ENCODE measurements at regions of chr1 and their contacts with region 1.

Region 1: GRCh38 chr1:1374929-1375662 is at the start of gene AURKAIP1:
- DNase-seq: peak; percentile 80 to 98 (median 96)
- ATAC-seq: peak; percentile 84
- H3K4me3 ChIP-seq: peak within 1 kb of the TSS; percentile 74
- H3K4me3 Mint-ChIP-seq: peak within 1 kb of the TSS; percentile 82 to 96 (median 94)
- H3K27ac ChIP-seq: peak within 1 kb of the TSS; percentile 88
- H3K27ac Mint-ChIP-seq: peak within 1 kb of the TSS; percentile 91 to 98 (median 97)
- H3K4me1 ChIP-seq: peaks cover 18 to 35% of the 10 kb centered on the region in 2 donors
- H3K4me1 Mint-ChIP-seq: peaks cover 0 to 37% (median 21%) of the 10 kb centered on the region in 7 donors
- H3K27me3 ChIP-seq: no peaks in the 10 kb centered on the region
- H3K27me3 Mint-ChIP-seq: peaks cover 0 to 2% (median 0%) of the 10 kb centered on the region in 5 donors
- total RNA-seq, gene AURKAIP1: 53.8 to 107 (median 64.5) TPM

Region 2: GRCh38 chr1:1019122-1019999 is 355.7 kb before region 1 on chr1:
- CTCF ChIA-PET with region 1: no interaction called
- POLR2A ChIA-PET with region 1: interaction called, 3 read pairs
- intact Hi-C with region 1: loop called in 1 of 2 experiments (anchors 10 kb)
- DNase-seq: peak; percentile 69 to 90 (median 82)
- ATAC-seq: peak; percentile 93
- H3K4me3 ChIP-seq: peak overlapping the region; percentile 11
- H3K4me3 Mint-ChIP-seq: peak overlapping the region in 9 of 10 donors; percentile 48 to 80 (median 68)
- H3K27ac ChIP-seq: peak overlapping the region; percentile 27
- H3K27ac Mint-ChIP-seq: peak overlapping the region in 4 of 9 donors; percentile 40 to 65 (median 55)
- H3K4me1 ChIP-seq: peaks cover 4 to 10% of the 10 kb centered on the region in 2 donors
- H3K4me1 Mint-ChIP-seq: peaks cover 9 to 26% (median 15%) of the 10 kb centered on the region in 7 donors
- H3K27me3 ChIP-seq: no peaks in the 10 kb centered on the region
- H3K27me3 Mint-ChIP-seq: peaks cover 0 to 17% (median 0%) of the 10 kb centered on the region in 5 donors

Region 3: GRCh38 chr1:1231400-1232223 is 143.5 kb before region 1 on chr1 and contains the start of gene SDF4:
- CTCF ChIA-PET with region 1: no interaction called
- POLR2A ChIA-PET with region 1: interaction called, 4 read pairs
- intact Hi-C with region 1: loop called in 1 of 2 experiments (anchors 1 kb)
- DNase-seq: peak; percentile 90 to 98 (median 96)
- ATAC-seq: peak; percentile 96
- H3K4me3 ChIP-seq: peak within 1 kb of the TSS; percentile 90
- H3K4me3 Mint-ChIP-seq: peak within 1 kb of the TSS; percentile 89 to 96 (median 93)
- H3K27ac ChIP-seq: peak within 1 kb of the TSS; percentile 96
- H3K27ac Mint-ChIP-seq: peak within 1 kb of the TSS; percentile 68 to 94 (median 92)
- H3K4me1 ChIP-seq: peaks cover 12 to 28% of the 10 kb centered on the region in 2 donors
- H3K4me1 Mint-ChIP-seq: peaks cover 16 to 42% (median 33%) of the 10 kb centered on the region in 7 donors
- H3K27me3 ChIP-seq: no peaks in the 10 kb centered on the region
- H3K27me3 Mint-ChIP-seq: no peaks in the 10 kb centered on the region
- total RNA-seq, gene SDF4: 75.8 to 124 (median 110) TPM

Region 4: DNA sequence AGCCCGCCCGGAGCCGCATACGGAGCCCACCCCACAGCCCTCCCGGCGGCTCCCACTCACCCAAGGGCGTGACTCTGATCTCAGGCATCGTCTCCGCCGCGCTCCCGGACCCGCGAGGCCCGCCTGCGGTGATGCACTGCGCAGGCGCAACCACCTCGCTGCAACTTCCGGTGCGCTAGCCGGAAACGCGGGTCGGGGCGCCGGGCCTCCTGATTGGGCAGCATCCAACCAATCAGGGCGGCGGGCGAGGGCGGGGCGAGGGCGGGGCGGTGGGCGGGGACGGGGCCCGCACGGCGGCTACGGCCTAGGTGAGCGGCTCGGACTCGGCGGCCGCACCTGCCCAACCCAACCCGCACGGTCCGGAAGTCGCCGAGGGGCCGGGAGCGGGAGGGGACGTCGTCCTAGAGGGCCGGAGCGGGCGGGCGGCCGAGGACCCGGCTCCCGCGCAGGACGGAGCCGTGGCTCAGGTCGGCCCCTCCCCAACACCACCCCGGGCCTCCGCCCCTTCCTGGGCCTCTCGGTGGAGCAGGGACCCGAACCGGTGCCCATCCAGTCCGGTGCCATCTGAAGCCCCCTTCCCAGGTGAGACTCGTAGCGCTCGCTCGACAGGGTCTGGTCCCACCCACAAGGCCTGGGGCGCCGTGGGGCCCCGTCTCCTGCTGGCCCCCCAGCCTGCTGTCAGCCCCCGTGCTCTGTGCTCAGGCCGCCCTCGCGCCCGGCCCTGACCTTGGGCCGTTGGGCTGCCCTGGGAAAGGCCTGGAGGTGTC is 50.4 kb before region 1 on chr1 and contains the starts of genes CPTP and INTS11:
- CTCF ChIA-PET with region 1: no interaction called
- POLR2A ChIA-PET with region 1: interaction called, 4 read pairs
- intact Hi-C with region 1: loop called in 1 of 2 experiments (anchors 1 kb)
- DNase-seq: peak; percentile 93 to 97 (median 95)
- ATAC-seq: peak; percentile 93
- H3K4me3 ChIP-seq: peak within 1 kb of the TSS; percentile 77
- H3K4me3 Mint-ChIP-seq: peak within 1 kb of the TSS; percentile 83 to 96 (median 90)
- H3K27ac ChIP-seq: peak within 1 kb of the TSS; percentile 92
- H3K27ac Mint-ChIP-seq: peak within 1 kb of the TSS; percentile 67 to 94 (median 91)
- H3K4me1 ChIP-seq: peaks cover 18 to 34% of the 10 kb centered on the region in 2 donors
- H3K4me1 Mint-ChIP-seq: peaks cover 12 to 53% (median 31%) of the 10 kb centered on the region in 7 donors
- H3K27me3 ChIP-seq: no peaks in the 10 kb centered on the region
- H3K27me3 Mint-ChIP-seq: no peaks in the 10 kb centered on the region
- total RNA-seq, gene CPTP: 11.5 to 29.3 (median 19.1) TPM
- total RNA-seq, gene INTS11: 126 to 187 (median 161) TPM

Region 5: DNA sequence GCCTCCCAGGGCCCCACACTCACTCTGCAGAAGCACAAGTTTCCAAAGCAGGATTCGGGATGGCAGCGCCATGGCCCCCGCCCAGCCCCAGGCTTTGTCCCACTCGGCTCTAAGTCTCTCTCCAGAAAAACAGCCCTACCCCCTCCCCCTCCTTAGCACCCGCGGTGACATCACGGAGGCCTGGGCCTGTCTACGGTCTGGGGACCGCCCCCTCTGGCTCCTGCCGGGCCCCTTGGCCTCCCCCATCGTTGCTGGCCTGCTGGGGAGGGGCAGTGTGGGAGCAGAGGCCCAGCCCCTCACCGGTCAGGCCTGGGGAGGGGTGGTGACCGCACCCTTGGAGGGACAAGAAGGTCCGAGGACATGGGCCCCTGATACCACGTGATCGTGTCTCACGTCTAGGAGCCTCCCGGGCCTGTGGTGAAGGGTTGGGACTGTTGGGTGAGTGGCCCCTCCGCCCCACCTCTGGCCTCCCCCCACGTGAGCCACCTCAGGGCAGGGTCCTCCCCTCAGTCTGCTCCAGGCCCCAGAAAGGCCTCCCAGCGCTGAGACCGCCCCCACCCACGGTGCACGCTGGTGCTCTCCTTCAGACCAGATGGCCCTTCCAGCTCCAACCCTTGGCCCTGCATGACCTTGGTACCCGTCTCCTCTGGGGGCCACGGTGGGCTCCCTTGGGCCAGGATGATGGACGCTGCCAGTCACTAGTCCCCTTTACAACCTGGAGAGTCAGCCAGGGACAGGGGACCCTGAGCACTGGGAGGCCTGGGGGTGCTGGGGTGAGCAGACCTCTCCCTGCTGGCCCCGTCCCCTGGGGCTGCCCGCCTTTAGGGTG is 16.4 kb before region 1 on chr1 and contains the start of gene MXRA8:
- CTCF ChIA-PET with region 1: no interaction called
- POLR2A ChIA-PET with region 1: interaction called, 10 read pairs
- intact Hi-C with region 1: loop called in 1 of 2 experiments (anchors 1 kb)
- DNase-seq: no peak
- ATAC-seq: peak; percentile 5
- H3K4me3 ChIP-seq: no peak within 1 kb of the TSS
- H3K4me3 Mint-ChIP-seq: peak within 1 kb of the TSS in 9 of 10 donors; percentile 25 to 75 (median 48)
- H3K27ac ChIP-seq: peak within 1 kb of the TSS; percentile 23
- H3K27ac Mint-ChIP-seq: peak within 1 kb of the TSS in 8 of 9 donors; percentile 4 to 78 (median 54)
- H3K4me1 ChIP-seq: peaks cover 0 to 11% of the 10 kb centered on the region in 2 donors
- H3K4me1 Mint-ChIP-seq: peaks cover 8 to 20% (median 13%) of the 10 kb centered on the region in 7 donors
- H3K27me3 ChIP-seq: peaks cover 0 to 9% of the 10 kb centered on the region in 2 donors
- H3K27me3 Mint-ChIP-seq: peaks cover 0 to 27% (median 7%) of the 10 kb centered on the region in 5 donors
- total RNA-seq, gene MXRA8: 0.39 to 2.2 (median 1.0) TPM

Region 6: GRCh38 chr1:1406817-1407635 is 31.9 kb after region 1 on chr1 and contains the start of gene MRPL20:
- CTCF ChIA-PET with region 1: interaction called, 3 read pairs
- POLR2A ChIA-PET with region 1: interaction called, 55 read pairs
- intact Hi-C with region 1: loop called (anchors 1 to 2 kb)
- DNase-seq: peak; percentile 88 to 96 (median 94)
- ATAC-seq: peak; percentile 97
- H3K4me3 ChIP-seq: peak within 1 kb of the TSS; percentile 89
- H3K4me3 Mint-ChIP-seq: peak within 1 kb of the TSS; percentile 83 to 96 (median 93)
- H3K27ac ChIP-seq: peak within 1 kb of the TSS; percentile 89
- H3K27ac Mint-ChIP-seq: peak within 1 kb of the TSS; percentile 90 to 97 (median 94)
- H3K4me1 ChIP-seq: peaks cover 19 to 20% of the 10 kb centered on the region in 2 donors
- H3K4me1 Mint-ChIP-seq: peaks cover 0 to 59% (median 35%) of the 10 kb centered on the region in 7 donors
- H3K27me3 ChIP-seq: no peaks in the 10 kb centered on the region
- H3K27me3 Mint-ChIP-seq: peaks cover 0 to 1% (median 0%) of the 10 kb centered on the region in 5 donors
- total RNA-seq, gene MRPL20: 91.2 to 135 (median 122) TPM

Region 7: GRCh38 chr1:1615256-1616044 is 240.4 kb after region 1 on chr1 and contains the start of gene MIB2:
- CTCF ChIA-PET with region 1: no interaction called
- POLR2A ChIA-PET with region 1: interaction called, 4 read pairs
- intact Hi-C with region 1: loop called in 1 of 2 experiments (anchors 1 kb)
- DNase-seq: peak; percentile 98 to 100 (median 99)
- ATAC-seq: peak; percentile 94
- H3K4me3 ChIP-seq: peak within 1 kb of the TSS; percentile 74
- H3K4me3 Mint-ChIP-seq: peak within 1 kb of the TSS; percentile 93 to 99 (median 96)
- H3K27ac ChIP-seq: peak within 1 kb of the TSS; percentile 100
- H3K27ac Mint-ChIP-seq: peak within 1 kb of the TSS; percentile 94 to 100 (median 99)
- H3K4me1 ChIP-seq: peaks cover 15 to 21% of the 10 kb centered on the region in 2 donors
- H3K4me1 Mint-ChIP-seq: peaks cover 18 to 36% (median 32%) of the 10 kb centered on the region in 7 donors
- H3K27me3 ChIP-seq: no peaks in the 10 kb centered on the region
- H3K27me3 Mint-ChIP-seq: no peaks in the 10 kb centered on the region
- total RNA-seq, gene MIB2: 45.6 to 129 (median 65.7) TPM

Measured in naive thymus-derived CD4-positive, alpha-beta T cell (primary cell).